CD4-positive, alpha-beta T cell (primary cell): ENCODE measurements at regions of chr2 and their contacts with region 1.

Region 1: GRCh38 chr2:69581774-69582581 is 61.6 kb downstream of the AAK1 start:
- DNase-seq: peak in 3 of 14 experiments; percentile 23 to 49 (median 38)
- ATAC-seq: peak; percentile 7
- H3K4me3 ChIP-seq: no peak overlapping the region
- H3K4me3 Mint-ChIP-seq: peak overlapping the region; percentile 49
- H3K27ac ChIP-seq: no peak overlapping the region
- H3K27ac Mint-ChIP-seq: peak overlapping the region; percentile 86
- H3K4me1 ChIP-seq: peaks cover 92% of the 10 kb centered on the region
- H3K4me1 Mint-ChIP-seq: peaks cover 95% of the 10 kb centered on the region
- H3K27me3 ChIP-seq: no peaks in the 10 kb centered on the region
- H3K27me3 Mint-ChIP-seq: no peaks in the 10 kb centered on the region
- CTCF ChIP-seq: no peak

Region 2: GRCh38 chr2:69565431-69565839 is 16.5 kb before region 1 on chr2:
- CTCF ChIA-PET with region 1: interaction called, 39 read pairs
- POLR2A ChIA-PET with region 1: interaction called, 6 read pairs
- intact Hi-C with region 1: no loop called
- DNase-seq: peak; percentile 41 to 82 (median 62)
- ATAC-seq: peak; percentile 77
- H3K4me3 ChIP-seq: no peak overlapping the region
- H3K4me3 Mint-ChIP-seq: peak overlapping the region; percentile 65
- H3K27ac ChIP-seq: no peak overlapping the region
- H3K27ac Mint-ChIP-seq: peak overlapping the region; percentile 82
- H3K4me1 ChIP-seq: peaks cover 59% of the 10 kb centered on the region
- H3K4me1 Mint-ChIP-seq: peaks cover 96% of the 10 kb centered on the region
- H3K27me3 ChIP-seq: no peaks in the 10 kb centered on the region
- H3K27me3 Mint-ChIP-seq: no peaks in the 10 kb centered on the region
- CTCF ChIP-seq: peak; percentile 94

Region 3: DNA sequence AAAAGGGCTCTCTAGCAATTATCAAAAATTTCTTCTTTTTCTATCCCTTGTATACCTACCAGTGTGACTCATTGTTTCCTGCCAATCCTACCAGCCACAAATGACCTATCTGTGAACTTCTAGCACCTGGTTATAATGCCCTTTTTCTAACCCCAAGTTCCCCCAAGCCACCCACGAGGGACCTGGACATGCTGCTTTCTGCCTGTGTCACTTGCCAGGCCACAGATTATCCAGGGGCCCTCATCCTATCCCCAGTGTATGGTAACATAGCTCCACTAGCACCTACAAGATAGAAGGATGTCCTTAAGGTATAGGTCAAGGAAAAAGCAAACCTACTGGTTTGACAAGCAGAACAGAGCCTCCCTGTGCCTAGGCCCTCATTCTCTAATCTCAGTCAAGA is 34.8 kb after region 1 on chr2:
- CTCF ChIA-PET with region 1: no interaction called
- POLR2A ChIA-PET with region 1: interaction called, 3 read pairs
- intact Hi-C with region 1: loop called in 1 of 2 experiments (anchors 5 kb)
- DNase-seq: peak in 9 of 14 experiments; percentile 8 to 75 (median 22)
- ATAC-seq: peak; percentile 72
- H3K4me3 ChIP-seq: no peak overlapping the region
- H3K4me3 Mint-ChIP-seq: peak overlapping the region; percentile 40
- H3K27ac ChIP-seq: no peak overlapping the region
- H3K27ac Mint-ChIP-seq: no peak overlapping the region
- H3K4me1 ChIP-seq: peaks cover 83% of the 10 kb centered on the region
- H3K4me1 Mint-ChIP-seq: peaks cover 45% of the 10 kb centered on the region
- H3K27me3 ChIP-seq: no peaks in the 10 kb centered on the region
- H3K27me3 Mint-ChIP-seq: no peaks in the 10 kb centered on the region
- CTCF ChIP-seq: no peak

Region 4: DNA sequence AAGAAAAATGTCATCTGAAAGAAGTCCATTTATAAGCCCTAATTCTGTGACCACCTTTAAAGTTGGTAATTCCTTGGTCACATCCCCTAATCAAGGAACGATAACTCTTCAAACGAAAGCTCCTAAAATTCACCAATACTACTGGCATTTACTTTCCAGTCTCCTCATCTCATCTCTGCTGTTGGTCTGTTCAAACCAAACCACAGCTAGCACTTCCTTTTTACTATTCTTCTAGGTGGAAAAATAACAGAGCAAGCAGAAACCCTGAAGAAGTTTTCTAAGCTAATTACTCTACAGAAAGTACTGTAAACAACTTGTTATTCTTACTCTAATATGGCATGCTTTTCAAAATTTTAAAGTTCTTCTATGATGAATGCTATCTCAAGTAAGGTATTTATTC is 644.8 kb after region 1 on chr2:
- CTCF ChIA-PET with region 1: no interaction called
- POLR2A ChIA-PET with region 1: no interaction called
- intact Hi-C with region 1: no loop called
- DNase-seq: no peak
- ATAC-seq: no peak
- H3K4me3 ChIP-seq: no peak overlapping the region
- H3K4me3 Mint-ChIP-seq: no peak overlapping the region
- H3K27ac ChIP-seq: no peak overlapping the region
- H3K27ac Mint-ChIP-seq: peak overlapping the region; percentile 51
- H3K4me1 ChIP-seq: no peaks in the 10 kb centered on the region
- H3K4me1 Mint-ChIP-seq: no peaks in the 10 kb centered on the region
- H3K27me3 ChIP-seq: no peaks in the 10 kb centered on the region
- H3K27me3 Mint-ChIP-seq: no peaks in the 10 kb centered on the region
- CTCF ChIP-seq: no peak